ENCODE measurements at regions of chr6 and their contacts with region 1.

Region 1: DNA sequence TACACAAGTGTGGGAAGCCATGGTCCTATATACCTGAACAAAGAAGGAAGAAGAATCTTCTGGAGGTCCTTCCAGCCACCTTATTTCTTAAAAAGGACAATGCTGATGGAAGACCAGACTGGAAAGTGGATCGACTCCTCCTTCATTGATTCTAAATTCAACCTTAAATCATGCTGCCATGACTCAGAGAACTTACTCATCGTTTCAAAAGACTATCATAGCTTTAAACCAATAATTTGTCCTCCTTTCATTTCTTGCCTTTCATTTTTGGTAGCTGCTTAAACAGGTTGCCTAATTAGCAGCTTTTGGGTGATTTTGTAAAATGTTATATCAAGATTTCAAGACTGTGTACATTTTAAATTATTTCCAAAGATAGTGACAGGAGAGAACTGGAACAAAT is 60.8 kb downstream of the RTN4IP1 start:
- DNase-seq: no peak
- ATAC-seq: no peak
- H3K4me3 ChIP-seq: no peak overlapping the region
- H3K27ac ChIP-seq: no peak overlapping the region
- H3K4me1 ChIP-seq: no peaks in the 10 kb centered on the region
- H3K27me3 ChIP-seq: no peaks in the 10 kb centered on the region
- CTCF ChIP-seq: no peak
- POLR2A ChIP-seq: no peak

Region 2: DNA sequence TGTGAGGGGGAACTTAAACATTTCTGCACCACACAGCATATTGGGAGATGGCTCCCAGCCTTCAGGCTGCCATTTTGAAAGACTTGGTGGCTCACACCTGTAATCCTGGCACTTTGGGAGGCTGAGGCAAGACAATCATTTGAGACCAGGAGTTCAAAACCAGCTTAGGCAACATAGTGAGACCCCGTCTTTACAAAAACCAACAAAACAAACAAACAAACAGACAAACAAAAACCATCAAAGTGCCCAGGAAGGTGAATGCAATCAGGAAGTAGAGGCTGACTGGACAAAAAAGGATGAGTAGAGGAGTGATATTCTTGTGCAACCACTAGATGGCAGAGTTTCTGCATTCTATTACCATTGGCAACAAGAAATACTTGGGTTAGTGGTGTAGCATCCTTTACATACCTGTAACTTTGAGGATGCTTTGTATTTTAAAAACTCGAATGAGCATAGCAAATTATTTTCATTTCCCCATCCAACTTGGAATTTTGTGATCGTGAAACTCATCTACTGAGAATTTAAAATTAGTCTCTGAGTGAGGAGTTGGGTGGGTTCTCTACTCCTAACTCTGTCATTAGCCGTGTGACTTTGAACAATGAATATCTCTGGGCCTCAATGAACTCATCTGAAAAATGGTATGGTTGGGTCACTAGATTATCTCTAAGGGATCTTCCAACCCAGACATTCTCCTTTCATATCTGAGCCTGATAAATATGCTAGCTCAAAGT is 123.6 kb before region 1 on chr6:
- intact Hi-C with region 1: loop called (anchors 5 kb)
- DNase-seq: no peak
- ATAC-seq: peak; percentile 82 to 91 (median 86)
- H3K4me3 ChIP-seq: no peak overlapping the region
- H3K27ac ChIP-seq: no peak overlapping the region
- H3K4me1 ChIP-seq: peaks cover 0 to 6% (median 0%) of the 10 kb centered on the region in 4 donors
- H3K27me3 ChIP-seq: no peaks in the 10 kb centered on the region
- CTCF ChIP-seq: peak; percentile 79 to 88 (median 82)
- POLR2A ChIP-seq: no peak

Measured in right lobe of liver (tissue), 6 donors.